Activated T-helper 2 cell treated with anti-CD3 and anti-CD28 coated beads, Interferon-gamma antibody, Interleukin-2, Interleukin-4, amounts not matched to agents 10 μg/mL and 5 μg/mL and 100 μg/mL, durations not matched to agents 14 hours and 24 hours and 36 hours (primary cell): ENCODE measurements at regions of chr13 and their contacts with region 1.

Region 1: GRCh38 chr13:108218044-108218974 is at the start of gene ABHD13:
- DNase-seq: peak; percentile 88
- H3K4me3 Mint-ChIP-seq: peak within 1 kb of the TSS; percentile 91
- H3K27ac Mint-ChIP-seq: peak within 1 kb of the TSS; percentile 88
- H3K4me1 Mint-ChIP-seq: peaks cover 30% of the 10 kb centered on the region
- H3K27me3 Mint-ChIP-seq: no peaks in the 10 kb centered on the region
- total RNA-seq, gene ABHD13: 6.0 and 6.8 TPM in 2 replicates

Region 2: GRCh38 chr13:106567474-106568298 is 1650.6 kb before region 1 on chr13 and contains the start of gene ARGLU1:
- intact Hi-C with region 1: loop called (anchors 5 kb)
- DNase-seq: peak; percentile 94
- H3K4me3 Mint-ChIP-seq: peak within 1 kb of the TSS; percentile 93
- H3K27ac Mint-ChIP-seq: peak within 1 kb of the TSS; percentile 87
- H3K4me1 Mint-ChIP-seq: peaks cover 44% of the 10 kb centered on the region
- H3K27me3 Mint-ChIP-seq: no peaks in the 10 kb centered on the region
- total RNA-seq, gene ARGLU1: 90.4 and 92.7 TPM in 2 replicates

Region 3: GRCh38 chr13:108200781-108201398 is 17.4 kb before region 1 on chr13:
- intact Hi-C with region 1: loop called (anchors 2 kb)
- DNase-seq: no peak
- H3K4me3 Mint-ChIP-seq: no peak overlapping the region
- H3K27ac Mint-ChIP-seq: no peak overlapping the region
- H3K4me1 Mint-ChIP-seq: peaks cover 25% of the 10 kb centered on the region
- H3K27me3 Mint-ChIP-seq: peaks cover 11% of the 10 kb centered on the region

Region 4: DNA sequence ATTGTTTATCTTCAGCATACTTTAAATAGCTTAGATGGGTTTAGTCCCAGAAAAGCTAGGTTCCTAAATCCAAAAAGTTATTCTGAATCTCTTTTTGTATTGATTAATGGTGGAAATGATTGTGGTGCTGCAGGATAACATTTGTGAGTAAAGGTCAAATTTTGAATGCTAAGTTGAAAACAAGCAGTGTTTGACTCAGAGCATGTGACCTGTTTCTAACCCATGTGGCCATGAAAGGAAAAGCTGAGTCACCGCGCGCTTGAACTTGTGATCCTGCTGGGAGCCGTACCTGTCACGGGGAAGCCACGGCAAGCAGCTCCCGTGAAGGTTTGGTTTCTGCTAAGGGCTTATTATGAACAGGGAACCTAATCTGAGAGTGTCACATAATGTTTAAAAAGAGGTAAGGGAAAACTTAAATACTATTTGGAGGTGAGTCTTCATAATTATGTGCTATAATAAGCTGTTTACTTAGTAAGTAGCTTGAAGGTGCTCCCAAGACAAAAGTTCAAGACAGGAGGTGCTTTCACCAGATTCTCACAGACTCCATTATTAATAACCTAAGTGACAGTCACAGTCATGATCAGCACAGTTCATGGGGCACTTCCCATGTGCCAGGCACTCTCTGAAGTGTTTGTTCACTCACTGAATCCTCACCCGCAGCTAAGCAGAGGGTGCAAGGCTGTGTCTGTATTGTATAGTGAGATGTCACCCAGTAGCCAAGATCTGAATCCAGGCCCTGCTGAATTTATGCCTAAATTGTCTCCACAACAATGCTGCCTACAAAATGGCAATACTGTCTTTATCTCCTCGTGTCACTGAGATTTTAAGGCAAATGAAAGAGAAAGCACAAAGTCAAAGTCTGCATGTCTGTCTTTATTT is 697.6 kb after region 1 on chr13:
- intact Hi-C with region 1: loop called (anchors 1 kb)
- DNase-seq: peak; percentile 73
- H3K4me3 Mint-ChIP-seq: peak overlapping the region; percentile 60
- H3K27ac Mint-ChIP-seq: peak overlapping the region; percentile 89
- H3K4me1 Mint-ChIP-seq: peaks cover 21% of the 10 kb centered on the region
- H3K27me3 Mint-ChIP-seq: peaks cover 15% of the 10 kb centered on the region